Activated CD4-positive, alpha-beta memory T cell treated with anti-CD3 and anti-CD28 coated beads for 36 hours (primary cell): ENCODE measurements at regions of chr3 and their contacts with region 1.

Region 1: GRCh38 chr3:14548321-14548729 is 8.2 kb upstream of the GRIP2 start:
- DNase-seq: peak; percentile 50
- H3K4me3 Mint-ChIP-seq: no peak overlapping the region
- H3K27ac Mint-ChIP-seq: no peak overlapping the region
- H3K4me1 Mint-ChIP-seq: no peaks in the 10 kb centered on the region
- H3K27me3 Mint-ChIP-seq: peaks cover 26% of the 10 kb centered on the region

Region 2: GRCh38 chr3:14092464-14092863 is 455.9 kb before region 1 on chr3:
- CTCF ChIA-PET with region 1: no interaction called
- POLR2A ChIA-PET with region 1: no interaction called
- intact Hi-C with region 1: no loop called
- DNase-seq: no peak
- H3K4me3 Mint-ChIP-seq: no peak overlapping the region
- H3K27ac Mint-ChIP-seq: no peak overlapping the region
- H3K4me1 Mint-ChIP-seq: no peaks in the 10 kb centered on the region
- H3K27me3 Mint-ChIP-seq: peaks cover 19% of the 10 kb centered on the region

Region 3: DNA sequence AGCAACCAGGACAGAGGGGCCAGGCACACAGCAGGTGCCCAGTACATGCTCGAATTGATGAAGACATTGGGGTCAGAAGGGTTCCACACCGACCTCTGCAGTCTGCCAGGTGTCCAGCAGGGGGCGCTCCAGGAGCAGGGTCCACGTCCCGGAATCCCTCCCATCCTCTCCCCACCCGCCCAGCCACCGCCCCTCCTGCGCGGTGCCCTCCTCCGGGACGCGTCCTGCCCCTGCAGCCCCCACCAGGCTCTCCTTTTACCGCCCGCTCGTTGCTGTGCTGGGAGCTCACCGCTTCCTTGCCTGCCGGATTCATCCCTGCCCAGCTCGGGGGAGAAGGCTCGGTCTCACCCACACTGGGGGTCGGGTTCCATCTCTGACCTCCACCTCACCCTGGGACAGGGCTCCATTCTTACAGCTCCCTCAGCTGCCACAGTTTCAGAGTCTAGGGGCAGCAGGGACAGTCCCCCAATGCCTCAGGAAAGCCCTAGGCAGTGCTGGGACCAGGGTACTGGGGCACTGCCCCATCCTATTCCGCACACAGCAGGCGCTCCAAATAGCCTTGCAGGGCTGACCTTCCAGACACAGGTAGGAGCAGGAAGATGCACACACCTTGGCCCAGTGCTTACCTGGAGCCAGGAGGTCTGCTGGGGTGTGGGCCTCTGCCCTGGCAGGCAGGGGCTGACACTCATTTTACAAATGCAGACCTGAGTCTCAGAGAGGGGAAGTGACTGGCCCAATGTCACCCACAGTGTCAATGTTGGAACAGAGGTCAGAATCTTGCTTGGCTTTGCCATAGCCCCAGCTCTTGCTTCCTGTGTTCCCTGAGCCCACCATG is 39.1 kb before region 1 on chr3:
- CTCF ChIA-PET with region 1: interaction called, 41 read pairs
- POLR2A ChIA-PET with region 1: no interaction called
- intact Hi-C with region 1: loop called (anchors 2 kb)
- DNase-seq: peak; percentile 82
- H3K4me3 Mint-ChIP-seq: no peak overlapping the region
- H3K27ac Mint-ChIP-seq: no peak overlapping the region
- H3K4me1 Mint-ChIP-seq: peaks cover 5% of the 10 kb centered on the region
- H3K27me3 Mint-ChIP-seq: peaks cover 3% of the 10 kb centered on the region